AG04450 (cell line): ENCODE measurements at regions of chr13 and their contacts with region 1.

Region 1: GRCh38 chr13:41384755-41385503 is 72.4 kb upstream of the RGCC start:
- DNase-seq: no peak
- H3K4me3 ChIP-seq: no peak overlapping the region
- H3K27ac ChIP-seq: no peak overlapping the region
- H3K27me3 ChIP-seq: peaks cover 2% of the 10 kb centered on the region
- CTCF ChIP-seq: peak; percentile 63

Region 2: GRCh38 chr13:41370736-41371135 is 14.2 kb before region 1 on chr13:
- CTCF ChIA-PET with region 1: interaction called, 11 read pairs
- POLR2A ChIA-PET with region 1: no interaction called
- DNase-seq: no peak
- H3K4me3 ChIP-seq: no peak overlapping the region
- H3K27ac ChIP-seq: no peak overlapping the region
- H3K27me3 ChIP-seq: no peaks in the 10 kb centered on the region
- CTCF ChIP-seq: no peak